Dorsolateral prefrontal cortex (tissue), 120 donors: ENCODE measurements at regions of chr10 and their contacts with region 1.

Region 1: GRCh38 chr10:70880077-70880534 is 8.3 kb downstream of the PCBD1 start:
- DNase-seq: peak; percentile 68 to 91 (median 81)
- H3K4me3 ChIP-seq: peak overlapping the region in 1 of 59 donors; percentile 20
- H3K27ac ChIP-seq: peak overlapping the region in 1 of 59 donors; percentile 28
- H3K27me3 ChIP-seq: no peaks in the 10 kb centered on the region
- CTCF ChIP-seq: peak; percentile 89 to 99 (median 96)

Region 2: GRCh38 chr10:70404036-70404786 is 475.9 kb before region 1 on chr10 and contains the start of gene EIF4EBP2:
- intact Hi-C with region 1: loop called in 1 of 2 experiments (anchors 10 kb)
- DNase-seq: peak; percentile 97 to 99 (median 98)
- H3K4me3 ChIP-seq: peak within 1 kb of the TSS; percentile 62 to 96 (median 88)
- H3K27ac ChIP-seq: peak within 1 kb of the TSS; percentile 37 to 97 (median 89)
- H3K27me3 ChIP-seq: no peaks in the 10 kb centered on the region
- CTCF ChIP-seq: peak in 17 of 56 donors; percentile 5 to 53 (median 20)
- total RNA-seq, gene EIF4EBP2: 28.6 to 91.0 (median 50.9) TPM

Region 3: GRCh38 chr10:70461215-70461986 is 418.7 kb before region 1 on chr10:
- intact Hi-C with region 1: loop called (anchors 2 to 10 kb)
- DNase-seq: peak in 7 of 10 donors; percentile 48 to 69 (median 60)
- H3K4me3 ChIP-seq: no peak overlapping the region
- H3K27ac ChIP-seq: peak overlapping the region in 19 of 59 donors; percentile 2 to 63 (median 28)
- H3K27me3 ChIP-seq: no peaks in the 10 kb centered on the region
- CTCF ChIP-seq: peak; percentile 52 to 89 (median 80)

Region 4: DNA sequence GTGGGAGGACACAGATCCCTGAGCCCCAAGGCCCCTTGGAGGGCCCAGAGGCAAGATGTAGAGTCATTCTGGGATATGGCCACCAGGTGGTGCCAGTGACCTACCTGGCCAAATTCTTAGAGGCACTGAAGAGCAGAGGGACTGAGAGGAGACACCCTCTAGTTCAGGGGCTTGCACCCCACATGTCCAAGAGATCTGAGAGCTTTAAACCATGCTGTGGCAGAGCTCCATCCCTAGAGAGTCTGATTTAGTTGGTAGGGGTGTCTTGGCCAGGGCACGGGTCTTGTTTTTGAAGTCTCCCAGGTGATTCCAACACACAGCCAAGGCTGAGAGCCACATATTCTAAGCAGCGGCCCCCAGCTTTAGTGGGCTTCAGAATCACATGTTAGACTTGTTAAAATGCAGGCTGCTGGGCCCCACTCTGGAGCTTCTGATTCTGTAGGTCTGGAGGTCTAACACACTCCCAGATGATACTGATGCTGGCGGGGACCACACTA is 330.1 kb before region 1 on chr10:
- intact Hi-C with region 1: loop called (anchors 2 to 5 kb)
- DNase-seq: peak; percentile 57 to 79 (median 64)
- H3K4me3 ChIP-seq: no peak overlapping the region
- H3K27ac ChIP-seq: peak overlapping the region in 1 of 59 donors; percentile 58
- H3K27me3 ChIP-seq: no peaks in the 10 kb centered on the region
- CTCF ChIP-seq: peak; percentile 82 to 97 (median 93)

Region 5: GRCh38 chr10:70672165-70673042 is 207.7 kb before region 1 on chr10 and contains the start of gene ADAMTS14:
- intact Hi-C with region 1: loop called in 1 of 2 experiments (anchors 10 kb)
- DNase-seq: peak; percentile 11 to 85 (median 66)
- H3K4me3 ChIP-seq: peak within 1 kb of the TSS; percentile 22 to 71 (median 58)
- H3K27ac ChIP-seq: peak within 1 kb of the TSS in 58 of 59 donors; percentile 38 to 99 (median 84)
- H3K27me3 ChIP-seq: peaks cover 0 to 10% (median 0%) of the 10 kb centered on the region in 45 donors
- CTCF ChIP-seq: peak in 14 of 56 donors; percentile 1 to 48 (median 12)
- total RNA-seq, gene ADAMTS14: 0.23 to 28.2 (median 3.7) TPM

Region 6: GRCh38 chr10:70758757-70759514 is 121.2 kb before region 1 on chr10:
- intact Hi-C with region 1: loop called (anchors 2 kb)
- DNase-seq: peak; percentile 44 to 87 (median 72)
- H3K4me3 ChIP-seq: no peak overlapping the region
- H3K27ac ChIP-seq: no peak overlapping the region
- H3K27me3 ChIP-seq: no peaks in the 10 kb centered on the region
- CTCF ChIP-seq: peak; percentile 44 to 98 (median 81)

Region 7: GRCh38 chr10:70771311-70772099 is 108.6 kb before region 1 on chr10:
- intact Hi-C with region 1: no loop called
- DNase-seq: no peak
- H3K4me3 ChIP-seq: no peak overlapping the region
- H3K27ac ChIP-seq: no peak overlapping the region
- H3K27me3 ChIP-seq: no peaks in the 10 kb centered on the region
- CTCF ChIP-seq: no peak

Region 8: GRCh38 chr10:70815504-70816219 is 64.4 kb before region 1 on chr10 and contains the start of gene SGPL1:
- intact Hi-C with region 1: loop called (anchors 2 to 5 kb)
- DNase-seq: peak; percentile 68 to 89 (median 77)
- H3K4me3 ChIP-seq: peak within 1 kb of the TSS; percentile 55 to 88 (median 78)
- H3K27ac ChIP-seq: peak within 1 kb of the TSS in 57 of 59 donors; percentile 3 to 95 (median 81)
- H3K27me3 ChIP-seq: no peaks in the 10 kb centered on the region
- CTCF ChIP-seq: peak; percentile 47 to 99 (median 91)
- total RNA-seq, gene SGPL1: 27.2 to 70.2 (median 47.7) TPM

Region 9: DNA sequence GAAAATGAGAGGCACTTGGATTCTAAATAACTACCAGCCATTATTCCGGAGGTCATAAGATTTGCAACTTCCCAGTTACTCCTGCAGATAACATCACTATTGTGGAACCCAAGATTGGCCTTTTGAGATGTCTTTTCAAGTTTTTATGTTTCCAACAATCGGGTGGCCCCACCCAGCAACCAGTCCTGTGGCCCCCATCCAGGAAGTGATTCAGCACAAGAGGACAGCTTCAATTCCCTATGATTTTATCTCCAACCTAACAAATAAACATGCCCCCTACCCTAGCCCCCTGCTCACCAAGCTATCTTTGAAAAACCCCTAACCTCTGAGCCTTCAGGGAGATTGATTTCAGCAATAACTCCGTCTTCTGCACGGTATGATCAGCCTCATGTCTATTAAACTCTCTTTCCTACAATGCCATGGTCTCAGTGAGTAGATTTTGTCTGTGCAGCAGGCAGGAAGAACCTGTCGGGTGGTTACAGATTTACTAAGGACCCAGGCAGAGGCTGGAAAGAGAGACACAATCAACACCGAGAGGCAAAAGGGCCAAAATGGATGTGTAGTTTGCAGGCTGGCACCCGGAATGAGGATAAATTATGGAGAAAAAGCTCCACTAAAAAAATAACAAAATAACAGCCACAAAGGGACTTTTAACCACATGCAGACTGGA is 248.3 kb after region 1 on chr10:
- intact Hi-C with region 1: no loop called
- DNase-seq: no peak
- H3K4me3 ChIP-seq: no peak overlapping the region
- H3K27ac ChIP-seq: no peak overlapping the region
- H3K27me3 ChIP-seq: peaks cover 0 to 12% (median 0%) of the 10 kb centered on the region in 45 donors
- CTCF ChIP-seq: no peak